ENCODE measurements at regions of chr6 and their contacts with region 1.

Region 1: DNA sequence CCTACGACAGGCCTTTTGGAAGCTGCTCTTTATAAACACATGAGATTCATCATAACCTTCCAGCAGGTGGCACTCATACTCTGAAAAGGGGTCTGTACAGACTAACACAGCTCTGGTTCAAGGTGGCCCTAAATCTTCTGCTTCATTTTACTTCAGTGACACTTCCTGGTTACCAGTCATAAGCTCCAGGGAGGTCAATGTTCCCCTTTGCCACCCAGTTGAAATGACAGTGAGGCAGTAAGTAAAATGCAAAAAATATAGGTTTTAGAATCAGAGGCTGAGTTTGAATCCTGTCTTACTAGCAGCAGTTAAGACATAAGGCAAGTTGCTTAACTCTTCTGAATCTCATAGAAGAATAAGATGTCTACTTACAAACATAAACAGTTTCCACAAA is 132.8 kb downstream of the CDK19 start:
- DNase-seq: peak; percentile 27
- ATAC-seq: peak; percentile 97

Region 2: GRCh38 chr6:110882271-110882613 is 199.8 kb after region 1 on chr6:
- intact Hi-C with region 1: loop called in 1 of 2 experiments (anchors 5 kb)
- DNase-seq: no peak
- ATAC-seq: no peak

Region 3: GRCh38 chr6:110949679-110950285 is 267.3 kb after region 1 on chr6:
- intact Hi-C with region 1: loop called (anchors 2 to 5 kb)
- DNase-seq: no peak
- ATAC-seq: no peak

Region 4: DNA sequence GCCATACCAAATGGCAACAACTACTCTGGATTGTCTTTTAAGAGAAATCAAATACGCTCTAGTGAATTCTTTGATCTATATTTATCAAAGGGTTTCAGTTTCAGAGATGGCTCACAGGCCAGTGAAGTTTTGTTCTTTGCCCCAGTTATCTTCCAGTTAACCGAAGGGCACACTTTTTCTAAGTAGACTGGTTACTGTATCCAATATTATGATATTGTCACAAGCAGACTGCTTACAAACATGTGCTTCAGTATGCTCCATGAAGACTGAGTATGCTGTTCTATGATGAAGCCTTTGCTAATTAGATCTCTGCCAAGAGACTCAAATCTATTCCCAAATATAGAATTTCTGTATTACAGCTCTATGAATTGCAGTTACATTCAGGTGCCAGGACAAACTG is 619.5 kb after region 1 on chr6:
- intact Hi-C with region 1: no loop called
- DNase-seq: no peak
- ATAC-seq: no peak

Measured in left cardiac atrium (tissue), 4 donors.